HepG2 (cell line): ENCODE measurements at regions of chr3 and their contacts with region 1.

Region 1: GRCh38 chr3:120558771-120559241 is 37.3 kb upstream of the NDUFB4 start:
- DNase-seq: peak; percentile 66
- ATAC-seq: peak; percentile 76
- H3K4me3 ChIP-seq: peak overlapping the region; percentile 52 to 73 (median 54)
- H3K27ac ChIP-seq: no peak overlapping the region
- H3K4me1 ChIP-seq: peaks cover 35% of the 10 kb centered on the region
- H3K27me3 ChIP-seq: peaks cover 0 to 5% of the 10 kb centered on the region in 2 experiments; a peak in 1 of 5 replicates
- CTCF ChIP-seq: peak; percentile 88
- EP300 ChIP-seq: no peak
- POLR2A ChIP-seq: no peak
- RAD21 ChIP-seq: peak; percentile 77; the same call in 1 of the 2 replicates

Region 2: DNA sequence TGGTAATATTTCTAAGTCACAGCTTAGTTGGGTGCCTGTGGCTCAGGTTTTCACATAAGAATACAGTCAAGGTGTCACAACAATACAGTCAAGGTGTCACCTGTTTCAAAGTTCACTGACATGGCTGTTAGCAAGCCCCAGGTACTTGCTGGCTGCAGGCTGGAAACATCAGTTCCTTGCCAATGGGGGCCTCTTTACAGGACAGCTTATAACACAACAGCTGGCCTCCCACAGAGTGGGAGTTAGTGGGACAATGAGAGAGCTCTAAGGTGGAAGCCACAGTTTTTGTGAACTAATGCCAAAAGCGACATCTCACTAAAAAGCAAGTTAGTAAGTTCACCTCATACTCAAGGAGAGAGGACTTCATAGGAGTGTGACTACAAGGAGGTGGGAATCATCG is 319.2 kb before region 1 on chr3:
- CTCF ChIA-PET with region 1: interaction called, 28 read pairs
- POLR2A ChIA-PET with region 1: no interaction called
- in situ Hi-C with region 1: loop called (anchors 5 kb)
- intact Hi-C with region 1: loop called (anchors 1 kb)
- DNase-seq: no peak
- ATAC-seq: no peak
- H3K4me3 ChIP-seq: no peak overlapping the region
- H3K27ac ChIP-seq: no peak overlapping the region
- H3K4me1 ChIP-seq: no peaks in the 10 kb centered on the region
- H3K27me3 ChIP-seq: 0 out of 5 replicates have a peak, but pooled peaks cover 0 to 3% of the 10 kb centered on the region in 2 experiments
- CTCF ChIP-seq: no peak
- EP300 ChIP-seq: no peak
- POLR2A ChIP-seq: no peak
- RAD21 ChIP-seq: no peak

Region 3: GRCh38 chr3:120245386-120245785 is 313.4 kb before region 1 on chr3:
- CTCF ChIA-PET with region 1: interaction called, 28 read pairs
- POLR2A ChIA-PET with region 1: no interaction called
- in situ Hi-C with region 1: loop called (anchors 5 kb)
- intact Hi-C with region 1: loop called (anchors 1 kb)
- DNase-seq: no peak
- ATAC-seq: no peak
- H3K4me3 ChIP-seq: no peak overlapping the region
- H3K27ac ChIP-seq: no peak overlapping the region
- H3K4me1 ChIP-seq: no peaks in the 10 kb centered on the region
- H3K27me3 ChIP-seq: no peaks in the 10 kb centered on the region
- CTCF ChIP-seq: no peak
- EP300 ChIP-seq: no peak
- POLR2A ChIP-seq: no peak
- RAD21 ChIP-seq: no peak

Region 4: GRCh38 chr3:120506828-120507774 is 51.7 kb before region 1 on chr3:
- CTCF ChIA-PET with region 1: no interaction called
- POLR2A ChIA-PET with region 1: no interaction called
- in situ Hi-C with region 1: no loop called
- intact Hi-C with region 1: loop called (anchors 1 kb)
- DNase-seq: peak; percentile 32
- ATAC-seq: peak; percentile 71
- H3K4me3 ChIP-seq: peak overlapping the region in 1 of 3 experiments; percentile 12; a peak in 1 of 6 replicates
- H3K27ac ChIP-seq: no peak overlapping the region
- H3K4me1 ChIP-seq: peaks cover 8% of the 10 kb centered on the region
- H3K27me3 ChIP-seq: peaks cover 0 to 8% of the 10 kb centered on the region in 2 experiments; a peak in 2 of 5 replicates
- CTCF ChIP-seq: peak; percentile 58
- EP300 ChIP-seq: no peak
- POLR2A ChIP-seq: no peak
- RAD21 ChIP-seq: no peak

Region 5: GRCh38 chr3:120795017-120795648 is 236.3 kb after region 1 on chr3:
- CTCF ChIA-PET with region 1: interaction called, 4 read pairs
- POLR2A ChIA-PET with region 1: no interaction called
- in situ Hi-C with region 1: loop called (anchors 5 kb)
- intact Hi-C with region 1: loop called (anchors 1 kb)
- DNase-seq: peak; percentile 73
- ATAC-seq: peak; percentile 94
- H3K4me3 ChIP-seq: no peak overlapping the region
- H3K27ac ChIP-seq: no peak overlapping the region
- H3K4me1 ChIP-seq: peaks cover 27% of the 10 kb centered on the region
- H3K27me3 ChIP-seq: peaks cover 0 to 4% of the 10 kb centered on the region in 2 experiments; a peak in 2 of 5 replicates
- CTCF ChIP-seq: peak; percentile 86
- EP300 ChIP-seq: no peak
- POLR2A ChIP-seq: no peak
- RAD21 ChIP-seq: peak; percentile 78